CD4-positive, alpha-beta T cell (primary cell): ENCODE measurements at regions of chr11 and their contacts with region 1.

Region 1: GRCh38 chr11:73141848-73142286 is 251 bp downstream of the FCHSD2 start:
- DNase-seq: peak in 9 of 14 experiments; percentile 35 to 83 (median 57)
- ATAC-seq: peak; percentile 29
- H3K4me3 ChIP-seq: peak overlapping the region; percentile 98
- H3K4me3 Mint-ChIP-seq: peak overlapping the region; percentile 99
- H3K27ac ChIP-seq: peak overlapping the region; percentile 76 to 98
- H3K27ac Mint-ChIP-seq: peak overlapping the region; percentile 96
- H3K4me1 ChIP-seq: peaks cover 26% of the 10 kb centered on the region
- H3K4me1 Mint-ChIP-seq: peaks cover 47% of the 10 kb centered on the region
- H3K27me3 ChIP-seq: no peaks in the 10 kb centered on the region
- H3K27me3 Mint-ChIP-seq: no peaks in the 10 kb centered on the region
- CTCF ChIP-seq: no peak

Region 2: GRCh38 chr11:72814286-72815109 is 327.4 kb before region 1 on chr11 and contains the start of gene ATG16L2:
- CTCF ChIA-PET with region 1: no interaction called
- POLR2A ChIA-PET with region 1: interaction called, 4 read pairs
- intact Hi-C with region 1: loop called in 1 of 2 experiments (anchors 5 kb)
- DNase-seq: peak in 13 of 14 experiments; percentile 78 to 95 (median 87)
- ATAC-seq: peak; percentile 81
- H3K4me3 ChIP-seq: peak within 1 kb of the TSS; percentile 96
- H3K4me3 Mint-ChIP-seq: peak within 1 kb of the TSS; percentile 99
- H3K27ac ChIP-seq: peak within 1 kb of the TSS; percentile 97 to 100
- H3K27ac Mint-ChIP-seq: peak within 1 kb of the TSS; percentile 97
- H3K4me1 ChIP-seq: peaks cover 38% of the 10 kb centered on the region
- H3K4me1 Mint-ChIP-seq: peaks cover 57% of the 10 kb centered on the region
- H3K27me3 ChIP-seq: no peaks in the 10 kb centered on the region
- H3K27me3 Mint-ChIP-seq: no peaks in the 10 kb centered on the region
- CTCF ChIP-seq: peak; percentile 29
- total RNA-seq, gene ATG16L2: 58.3 to 61.6 TPM

Region 3: DNA sequence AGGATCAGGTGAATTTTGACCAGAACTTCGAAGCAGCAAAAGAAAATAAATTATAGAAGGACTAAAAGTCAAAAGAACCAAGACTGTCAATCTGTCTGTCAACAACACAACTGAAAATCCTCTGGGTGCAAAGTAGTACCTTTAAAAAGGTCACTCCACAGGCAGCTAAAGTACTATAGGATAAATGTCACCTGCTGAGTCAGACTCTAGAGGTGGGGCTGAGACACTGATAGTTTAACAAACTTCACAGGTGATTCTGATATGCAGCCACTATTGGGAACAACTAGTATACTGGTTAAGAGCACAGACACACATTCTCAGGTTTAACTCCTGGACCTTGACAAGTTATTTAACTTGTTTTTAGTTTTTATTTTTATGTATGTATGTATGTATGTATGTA is 107.1 kb before region 1 on chr11:
- CTCF ChIA-PET with region 1: interaction called, 3 read pairs
- POLR2A ChIA-PET with region 1: interaction called, 20 read pairs
- intact Hi-C with region 1: loop called in 1 of 2 experiments (anchors 10 kb)
- DNase-seq: peak in 4 of 14 experiments; percentile 13 to 28 (median 16)
- ATAC-seq: peak; percentile 50
- H3K4me3 ChIP-seq: peak overlapping the region; percentile 8
- H3K4me3 Mint-ChIP-seq: peak overlapping the region; percentile 68
- H3K27ac ChIP-seq: peak overlapping the region in 1 of 2 donors; percentile 36
- H3K27ac Mint-ChIP-seq: peak overlapping the region; percentile 88
- H3K4me1 ChIP-seq: peaks cover 13% of the 10 kb centered on the region
- H3K4me1 Mint-ChIP-seq: peaks cover 50% of the 10 kb centered on the region
- H3K27me3 ChIP-seq: no peaks in the 10 kb centered on the region
- H3K27me3 Mint-ChIP-seq: no peaks in the 10 kb centered on the region
- CTCF ChIP-seq: no peak

Region 4: DNA sequence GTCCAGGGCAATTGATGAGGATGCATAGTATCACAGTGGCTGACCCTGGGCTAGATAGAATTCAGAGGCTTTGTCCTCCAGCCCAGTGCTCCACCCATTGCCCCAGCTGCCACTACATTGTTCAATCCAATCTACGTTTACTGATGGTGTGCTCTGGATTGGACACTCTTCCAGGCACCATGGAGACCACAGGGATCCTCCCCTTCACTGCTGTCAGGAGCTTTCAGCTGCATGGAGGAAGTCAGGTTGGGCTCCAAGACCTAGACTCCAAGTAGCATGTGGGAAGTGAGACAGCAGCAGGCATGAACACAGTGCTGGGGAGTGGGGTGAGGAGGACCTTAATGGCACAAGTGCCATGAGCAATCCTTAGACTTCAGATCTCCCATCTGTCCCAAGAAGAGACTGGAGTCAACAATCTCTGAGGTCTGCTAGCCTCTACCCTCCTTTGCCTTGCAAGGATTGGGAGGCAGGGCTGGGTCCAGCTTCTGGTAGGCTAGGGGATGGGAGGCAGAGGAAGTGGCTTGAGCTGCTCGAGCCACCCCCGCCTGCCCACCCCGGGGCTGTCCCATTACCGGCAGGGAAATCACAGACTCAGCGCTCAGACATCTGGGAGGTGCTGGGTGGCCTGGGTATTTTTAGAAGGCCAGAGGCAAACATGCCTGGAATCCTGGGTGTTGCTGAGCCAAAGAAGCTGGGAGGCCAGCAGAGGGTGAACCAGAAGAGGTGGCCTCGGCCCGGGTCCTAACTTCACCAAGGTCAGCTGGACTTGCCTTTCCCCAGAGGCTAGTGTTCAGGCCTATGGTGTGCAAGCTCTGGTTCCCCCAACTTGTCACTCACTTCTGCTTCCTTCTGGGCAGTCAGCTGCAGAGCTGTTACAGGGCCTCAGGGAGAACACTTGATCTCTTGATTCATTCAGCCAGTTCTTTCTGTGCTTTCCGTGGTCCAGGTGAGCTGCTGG is 15.5 kb after region 1 on chr11:
- CTCF ChIA-PET with region 1: interaction called, 5 read pairs
- POLR2A ChIA-PET with region 1: interaction called, 32 read pairs
- intact Hi-C with region 1: no loop called
- DNase-seq: no peak
- ATAC-seq: no peak
- H3K4me3 ChIP-seq: no peak overlapping the region
- H3K4me3 Mint-ChIP-seq: no peak overlapping the region
- H3K27ac ChIP-seq: no peak overlapping the region
- H3K27ac Mint-ChIP-seq: no peak overlapping the region
- H3K4me1 ChIP-seq: peaks cover 60% of the 10 kb centered on the region
- H3K4me1 Mint-ChIP-seq: peaks cover 42% of the 10 kb centered on the region
- H3K27me3 ChIP-seq: no peaks in the 10 kb centered on the region
- H3K27me3 Mint-ChIP-seq: no peaks in the 10 kb centered on the region
- CTCF ChIP-seq: no peak

Region 5: DNA sequence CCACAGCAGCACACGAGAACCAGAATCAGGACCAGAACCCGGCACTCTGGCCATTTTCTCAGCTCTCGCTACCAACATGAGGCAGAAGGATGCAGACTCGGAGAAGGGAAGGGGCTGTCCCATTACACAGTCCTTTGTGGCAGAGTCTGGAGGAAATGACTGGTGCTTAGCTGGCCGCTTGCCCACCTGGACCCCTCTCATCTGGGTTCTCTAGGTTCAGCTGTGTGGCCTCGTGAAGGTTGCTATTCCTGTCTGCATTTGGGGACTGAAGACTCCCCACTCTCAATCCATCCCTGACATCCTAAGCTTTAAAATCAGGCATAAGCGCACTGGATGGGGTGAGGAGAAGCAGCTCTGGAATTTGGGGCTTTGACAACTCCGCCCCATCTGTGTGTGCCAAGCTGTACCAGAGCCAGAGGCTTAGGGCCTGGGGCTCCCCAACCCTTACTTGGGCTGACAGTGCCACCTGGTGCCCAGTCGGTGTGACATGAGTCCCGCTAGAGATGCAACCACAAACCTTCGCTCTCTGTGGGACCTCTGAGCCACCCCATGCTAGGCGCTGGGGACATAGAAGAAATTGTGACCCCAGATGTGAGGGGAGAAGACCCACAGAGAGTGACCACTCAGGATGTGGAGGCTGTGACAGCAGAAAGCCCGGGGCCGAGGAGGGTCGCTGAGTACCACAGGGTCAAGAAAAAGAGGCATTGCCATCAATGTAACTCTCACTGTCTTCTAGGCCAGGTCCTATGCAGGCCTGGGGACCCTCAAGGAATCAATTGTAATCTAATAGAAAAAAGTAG is 36.1 kb after region 1 on chr11:
- CTCF ChIA-PET with region 1: interaction called, 3 read pairs
- POLR2A ChIA-PET with region 1: interaction called, 10 read pairs
- intact Hi-C with region 1: loop called in 1 of 2 experiments (anchors 2 kb)
- DNase-seq: peak; percentile 71 to 89 (median 75)
- ATAC-seq: peak; percentile 100
- H3K4me3 ChIP-seq: no peak overlapping the region
- H3K4me3 Mint-ChIP-seq: no peak overlapping the region
- H3K27ac ChIP-seq: no peak overlapping the region
- H3K27ac Mint-ChIP-seq: no peak overlapping the region
- H3K4me1 ChIP-seq: peaks cover 7% of the 10 kb centered on the region
- H3K4me1 Mint-ChIP-seq: no peaks in the 10 kb centered on the region
- H3K27me3 ChIP-seq: no peaks in the 10 kb centered on the region
- H3K27me3 Mint-ChIP-seq: no peaks in the 10 kb centered on the region
- CTCF ChIP-seq: peak; percentile 78

Region 6: DNA sequence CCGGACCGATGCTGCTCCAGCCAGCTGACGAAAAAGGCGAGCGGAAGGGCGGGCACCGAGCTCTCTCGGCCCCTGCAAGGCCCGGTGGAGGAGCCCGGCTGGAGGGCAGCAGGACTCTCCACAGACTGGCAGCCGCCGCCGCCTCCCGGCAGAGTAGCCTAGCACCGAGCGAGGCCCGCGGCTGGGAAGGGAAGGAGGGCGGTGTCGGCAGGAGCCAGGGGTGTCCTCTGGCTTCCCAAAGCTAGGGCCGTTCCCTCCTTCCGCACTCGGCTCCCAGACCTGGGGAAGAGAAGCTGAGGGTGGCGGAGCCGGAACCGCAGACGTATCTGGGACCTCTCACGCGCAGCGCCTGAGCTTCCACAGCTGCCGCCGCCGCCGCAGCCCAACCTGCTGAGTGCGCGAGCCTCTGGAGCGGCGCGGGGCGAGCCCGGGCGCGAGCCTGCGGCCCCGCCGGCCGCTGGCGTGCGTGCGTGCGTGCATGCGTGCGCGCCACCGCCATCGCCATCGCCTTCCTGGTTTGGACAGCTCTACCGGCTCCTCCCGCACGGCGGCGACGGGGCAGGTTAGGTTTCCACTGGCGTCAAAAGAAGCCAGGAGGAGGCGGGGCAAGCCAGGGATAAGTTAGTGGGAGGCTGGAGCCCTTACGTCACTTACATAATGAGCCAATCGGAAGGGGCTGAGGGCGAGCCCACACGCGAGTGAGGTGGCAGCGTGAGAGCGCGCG is 619.0 kb after region 1 on chr11 and contains the start of gene RAB6A:
- CTCF ChIA-PET with region 1: interaction called, 4 read pairs
- POLR2A ChIA-PET with region 1: interaction called, 4 read pairs
- intact Hi-C with region 1: loop called in 1 of 2 experiments (anchors 5 kb)
- DNase-seq: peak; percentile 98 to 100 (median 100)
- ATAC-seq: peak; percentile 90
- H3K4me3 ChIP-seq: peak within 1 kb of the TSS; percentile 93
- H3K4me3 Mint-ChIP-seq: peak within 1 kb of the TSS; percentile 84
- H3K27ac ChIP-seq: peak within 1 kb of the TSS; percentile 82 to 84
- H3K27ac Mint-ChIP-seq: peak within 1 kb of the TSS; percentile 83
- H3K4me1 ChIP-seq: peaks cover 13% of the 10 kb centered on the region
- H3K4me1 Mint-ChIP-seq: peaks cover 39% of the 10 kb centered on the region
- H3K27me3 ChIP-seq: no peaks in the 10 kb centered on the region
- H3K27me3 Mint-ChIP-seq: no peaks in the 10 kb centered on the region
- CTCF ChIP-seq: no peak
- total RNA-seq, gene RAB6A: 42.6 to 49.3 TPM